KBM-7 (cell line): ENCODE measurements at regions of chr6 and their contacts with region 1.

Region 1: GRCh38 chr6:139375232-139376016 is 976 bp upstream of the CITED2 start:
- DNase-seq: peak; percentile 97

Region 2: DNA sequence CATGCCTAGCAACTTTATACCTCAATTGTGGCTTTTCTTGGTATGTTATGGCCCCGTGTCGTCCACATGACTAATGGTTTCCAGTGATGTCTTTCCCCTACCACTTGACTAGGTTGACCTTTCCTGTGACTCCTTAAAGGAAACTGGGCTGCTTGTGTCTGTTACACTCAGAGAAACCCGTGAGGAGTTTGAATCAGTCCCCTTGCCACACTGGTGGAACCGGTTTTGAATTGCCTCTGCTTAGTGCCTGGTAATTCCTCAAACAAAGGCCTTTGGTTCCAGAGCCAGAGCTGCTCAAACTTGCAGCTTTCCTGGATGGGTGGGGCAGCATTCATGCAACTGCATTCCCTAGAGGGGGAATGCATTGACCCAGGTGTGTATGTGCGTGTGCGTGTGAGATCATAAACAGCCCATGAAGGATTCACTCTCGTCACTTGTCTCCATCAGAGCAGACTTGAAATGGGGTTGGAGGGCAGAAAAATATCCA is 557.6 kb before region 1 on chr6:
- in situ Hi-C with region 1: loop called (anchors 25 kb)
- DNase-seq: no peak

Region 3: GRCh38 chr6:139134817-139135581 is 240.4 kb before region 1 on chr6 and contains the start of gene HECA:
- in situ Hi-C with region 1: loop called (anchors 25 kb)
- DNase-seq: peak; percentile 92

Region 4: GRCh38 chr6:139640448-139640847 is 265.0 kb after region 1 on chr6:
- in situ Hi-C with region 1: loop called (anchors 25 kb)
- DNase-seq: peak; percentile 82

Region 5: GRCh38 chr6:139903411-139904157 is 528.2 kb after region 1 on chr6:
- in situ Hi-C with region 1: loop called (anchors 25 kb)
- DNase-seq: no peak

Region 6: GRCh38 chr6:140441256-140441655 is 1065.8 kb after region 1 on chr6:
- in situ Hi-C with region 1: loop called (anchors 25 kb)
- DNase-seq: peak; percentile 72